Heart right ventricle (tissue), 16 donors: ENCODE measurements at regions of chr2 and their contacts with region 1.

Region 1: GRCh38 chr2:64259312-64259711 is 115.1 kb upstream of the PELI1 start:
- DNase-seq: peak; percentile 55 to 70
- ATAC-seq: peak in 6 of 8 donors; percentile 21 to 78 (median 52)
- H3K4me3 ChIP-seq: no peak overlapping the region
- H3K27ac ChIP-seq: peak overlapping the region in 2 of 10 donors; percentile 4 to 87
- H3K4me1 ChIP-seq: peaks cover 0 to 63% (median 28%) of the 10 kb centered on the region in 9 donors
- H3K27me3 ChIP-seq: peaks cover 0 to 7% (median 0%) of the 10 kb centered on the region in 7 donors
- CTCF ChIP-seq: no peak

Region 2: DNA sequence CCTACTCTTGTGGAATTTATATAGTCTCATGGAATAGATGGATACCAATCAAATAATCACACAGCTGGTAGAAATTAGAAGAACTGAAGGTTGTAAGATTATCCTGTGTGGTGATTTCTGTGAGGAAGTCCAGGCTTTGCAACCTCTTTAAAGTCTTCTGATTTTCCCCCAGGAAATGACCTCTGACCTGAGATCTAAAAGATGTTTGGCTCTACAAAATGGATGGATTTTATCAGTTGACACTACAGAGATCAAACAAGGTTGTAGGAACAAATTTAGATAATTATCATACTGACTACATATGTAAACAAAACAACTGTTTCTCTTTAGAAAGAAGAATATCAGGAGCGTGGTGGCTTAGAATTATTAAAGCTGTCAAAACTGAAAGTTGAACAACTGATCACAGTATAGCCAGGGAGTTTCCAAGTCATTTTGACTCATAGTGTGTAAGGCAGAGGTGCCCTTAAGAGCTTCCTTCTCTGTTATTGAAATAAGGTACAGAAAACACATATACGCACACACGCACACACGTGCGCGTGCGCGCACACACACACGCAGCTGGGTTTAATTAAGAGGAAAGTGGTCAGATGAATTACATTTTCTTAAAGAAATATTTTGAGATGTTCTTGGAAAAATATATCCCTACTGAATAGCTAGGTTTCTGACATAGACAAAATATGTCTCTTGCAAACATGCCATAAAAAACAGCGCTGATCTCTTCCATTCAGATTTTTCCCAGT is 79.6 kb before region 1 on chr2:
- intact Hi-C with region 1: no loop called
- DNase-seq: no peak
- ATAC-seq: no peak
- H3K4me3 ChIP-seq: no peak overlapping the region
- H3K27ac ChIP-seq: no peak overlapping the region
- H3K4me1 ChIP-seq: peaks cover 0 to 4% (median 0%) of the 10 kb centered on the region in 9 donors
- H3K27me3 ChIP-seq: no peaks in the 10 kb centered on the region
- CTCF ChIP-seq: no peak

Region 3: DNA sequence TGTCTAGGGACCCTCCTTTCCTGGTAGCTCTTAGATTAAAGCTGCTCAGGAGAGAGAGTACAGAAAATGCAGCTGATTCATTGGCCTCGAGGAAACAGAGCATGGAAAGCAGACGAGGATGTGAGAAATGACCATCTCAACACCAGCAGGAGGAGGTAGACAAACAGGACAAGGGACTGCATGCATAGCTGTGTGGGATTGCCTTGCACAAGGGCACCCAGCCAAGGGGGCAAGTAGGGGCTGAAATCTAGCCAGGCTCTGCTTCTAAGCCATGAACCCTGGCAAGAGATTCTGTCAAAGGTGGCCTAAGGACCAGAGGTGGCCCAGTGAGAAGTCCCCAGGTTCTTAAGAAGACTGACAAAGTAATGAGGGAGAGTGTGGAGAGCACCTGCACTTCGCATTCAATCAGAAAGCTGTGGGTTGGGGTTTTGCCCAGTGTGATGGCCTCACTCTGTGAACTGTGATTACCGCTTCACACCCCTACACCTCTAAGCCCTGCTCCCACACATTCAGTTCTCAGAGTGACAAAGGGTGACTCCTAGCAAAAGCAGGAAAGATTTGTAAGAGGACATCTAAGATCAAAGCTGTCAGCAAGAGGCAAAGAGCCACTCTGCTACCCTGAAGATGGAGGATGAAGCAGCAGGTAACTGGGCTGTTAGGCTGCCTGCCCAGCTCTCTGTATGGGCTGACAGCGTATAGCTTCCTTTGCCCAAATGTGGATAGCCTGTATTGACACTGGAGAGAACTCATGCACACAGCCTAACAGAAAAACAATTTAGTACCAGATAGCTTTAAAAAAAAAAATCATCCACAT is 36.2 kb after region 1 on chr2:
- intact Hi-C with region 1: loop called in 1 of 10 experiments (anchors 2 kb)
- DNase-seq: no peak
- ATAC-seq: peak in 2 of 8 donors; percentile 19 to 33
- H3K4me3 ChIP-seq: no peak overlapping the region
- H3K27ac ChIP-seq: no peak overlapping the region
- H3K4me1 ChIP-seq: peaks cover 0 to 8% (median 0%) of the 10 kb centered on the region in 9 donors
- H3K27me3 ChIP-seq: no peaks in the 10 kb centered on the region
- CTCF ChIP-seq: no peak

Region 4: GRCh38 chr2:64463781-64464180 is 204.5 kb after region 1 on chr2:
- intact Hi-C with region 1: no loop called
- DNase-seq: no peak
- ATAC-seq: peak in 1 of 8 donors; percentile 27
- H3K4me3 ChIP-seq: no peak overlapping the region
- H3K27ac ChIP-seq: no peak overlapping the region
- H3K4me1 ChIP-seq: peaks cover 0 to 14% (median 0%) of the 10 kb centered on the region in 9 donors
- H3K27me3 ChIP-seq: no peaks in the 10 kb centered on the region
- CTCF ChIP-seq: no peak